ENCODE measurements at regions of chr19 and their contacts with region 1.

Region 1: DNA sequence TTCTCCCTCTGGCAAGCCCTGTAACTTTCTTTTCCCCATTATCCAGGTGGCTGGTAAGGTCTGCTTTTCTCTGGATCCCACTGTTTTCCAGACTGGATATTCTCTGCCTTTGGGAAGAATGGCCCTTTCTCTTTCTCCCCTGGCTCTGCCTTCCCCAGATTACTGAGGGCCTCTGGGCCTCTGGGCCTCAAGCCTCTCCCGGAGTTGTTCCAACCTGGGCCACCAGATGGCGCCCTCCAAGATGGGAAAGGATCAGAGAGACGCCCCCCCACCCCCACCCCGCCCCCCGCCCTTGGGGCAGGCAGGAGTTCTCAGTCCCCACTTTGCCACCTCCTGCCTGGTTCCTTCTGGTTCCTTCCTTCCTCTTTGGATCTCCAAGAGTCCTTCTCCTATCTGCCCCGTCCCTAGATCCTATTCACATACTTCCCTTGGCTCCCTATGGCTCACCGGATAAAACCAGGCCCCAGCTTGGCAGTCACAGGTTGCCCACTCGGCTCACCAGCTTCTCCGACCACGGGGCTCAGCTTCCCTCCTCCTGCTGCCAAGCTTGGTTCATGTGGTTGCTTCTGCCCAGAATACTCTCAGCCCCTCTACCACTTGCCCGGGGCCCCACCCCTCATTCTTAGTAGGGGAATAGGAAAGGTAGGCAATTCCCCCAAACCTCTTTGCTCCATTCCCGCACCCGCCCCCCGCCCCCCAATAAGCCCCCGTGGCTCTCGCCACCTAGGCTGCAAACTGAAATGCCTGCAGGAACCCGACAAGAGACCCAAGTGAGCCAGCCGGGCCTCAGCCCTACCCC is 13.1 kb downstream of the EPS8L1 start:
- DNase-seq: no peak
- H3K4me3 ChIP-seq: no peak overlapping the region
- CTCF ChIP-seq: peak; percentile 74

Region 2: GRCh38 chr19:54817670-54818536 is 270.8 kb before region 1 on chr19:
- CTCF ChIA-PET with region 1: no interaction called
- POLR2A ChIA-PET with region 1: no interaction called
- DNase-seq: no peak
- H3K4me3 ChIP-seq: no peak overlapping the region
- CTCF ChIP-seq: no peak

Region 3: GRCh38 chr19:55027472-55028337 is 61.0 kb before region 1 on chr19:
- CTCF ChIA-PET with region 1: no interaction called
- POLR2A ChIA-PET with region 1: no interaction called
- DNase-seq: no peak
- H3K4me3 ChIP-seq: no peak overlapping the region
- CTCF ChIP-seq: no peak

Region 4: DNA sequence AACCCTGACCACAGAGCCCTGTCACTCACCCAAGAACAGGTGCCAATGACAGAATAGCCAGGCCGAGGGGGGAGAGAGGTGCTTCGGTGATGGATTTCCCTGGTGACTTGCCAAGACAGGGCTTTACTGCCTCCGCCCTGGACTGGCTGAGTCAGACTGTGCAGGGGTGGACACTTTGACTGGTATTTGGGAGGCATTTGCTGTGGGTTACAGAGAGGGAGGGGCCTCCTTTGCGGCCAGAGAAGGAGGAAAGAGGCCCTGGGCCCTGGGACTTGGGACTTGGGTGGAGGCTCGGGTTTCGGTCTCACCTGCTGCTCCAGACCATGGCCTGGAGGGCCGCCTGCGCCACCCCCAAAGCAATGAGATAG is 17.6 kb before region 1 on chr19:
- CTCF ChIA-PET with region 1: interaction called, 20 read pairs
- POLR2A ChIA-PET with region 1: no interaction called
- DNase-seq: no peak
- H3K4me3 ChIP-seq: no peak overlapping the region
- CTCF ChIP-seq: no peak

Region 5: GRCh38 chr19:55099533-55100506 is 11.1 kb after region 1 on chr19:
- CTCF ChIA-PET with region 1: interaction called, 43 read pairs
- POLR2A ChIA-PET with region 1: no interaction called
- DNase-seq: no peak
- H3K4me3 ChIP-seq: no peak overlapping the region
- CTCF ChIP-seq: no peak

Region 6: DNA sequence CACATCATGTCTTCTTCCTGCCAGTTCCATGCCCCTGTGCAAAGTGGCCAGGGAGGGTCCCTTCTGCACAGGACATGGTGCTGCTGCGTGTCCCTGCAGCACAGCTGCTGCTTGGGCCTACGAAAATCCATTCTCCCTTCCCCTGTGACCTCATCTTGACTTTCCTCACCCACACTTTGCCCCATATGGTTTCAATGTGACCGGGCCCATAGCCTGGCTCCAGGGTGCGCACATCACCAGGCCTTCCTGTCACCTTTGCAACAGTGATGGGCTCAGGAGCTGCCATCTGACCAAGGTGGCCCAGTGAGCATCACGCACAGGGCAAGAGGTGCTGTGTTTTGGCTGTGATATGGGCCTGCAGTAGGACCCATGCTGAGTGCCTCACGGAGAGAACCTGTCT is 17.8 kb after region 1 on chr19:
- CTCF ChIA-PET with region 1: interaction called, 43 read pairs
- POLR2A ChIA-PET with region 1: no interaction called
- DNase-seq: no peak
- H3K4me3 ChIP-seq: no peak overlapping the region
- CTCF ChIP-seq: no peak

Region 7: DNA sequence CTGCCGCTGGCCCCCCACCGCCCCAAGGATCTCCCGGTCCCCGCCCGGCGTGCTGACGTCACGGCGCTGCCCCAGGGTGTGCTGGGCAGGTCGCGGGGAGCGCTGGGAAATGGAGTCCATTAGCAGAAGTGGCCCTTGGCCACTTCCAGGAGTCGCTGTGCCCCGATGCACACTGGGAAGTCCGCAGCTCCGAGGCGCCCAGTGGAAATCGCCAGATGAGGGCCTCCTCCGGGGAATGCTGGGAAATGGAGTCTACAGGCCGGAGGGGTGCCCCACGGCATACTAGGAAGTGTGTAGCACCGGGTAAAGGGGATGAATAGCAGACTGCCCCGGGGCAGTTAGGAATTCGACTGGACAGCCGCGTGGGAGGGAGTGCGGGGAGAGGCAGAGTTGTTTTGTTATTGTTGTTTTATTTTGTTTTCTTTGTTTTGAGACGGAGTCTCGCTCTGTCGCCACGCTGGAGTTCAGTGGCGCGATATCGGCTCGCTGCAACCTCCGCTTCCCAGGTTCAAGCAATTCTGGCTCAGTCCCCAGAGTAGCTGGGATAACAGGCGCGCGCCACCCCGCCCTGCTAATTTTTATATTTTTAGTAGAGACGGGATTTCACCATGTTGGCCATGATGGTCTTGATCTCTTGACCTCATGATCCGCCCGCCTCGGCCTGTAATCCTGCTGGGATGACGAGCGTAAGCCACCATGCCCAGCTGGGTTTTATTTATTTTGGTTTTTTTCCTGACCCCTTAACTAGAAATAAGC is 29.1 kb after region 1 on chr19 and contains the start of gene PPP1R12C:
- CTCF ChIA-PET with region 1: interaction called, 18 read pairs
- POLR2A ChIA-PET with region 1: no interaction called
- DNase-seq: peak; percentile 92
- H3K4me3 ChIP-seq: peak within 1 kb of the TSS; percentile 84
- CTCF ChIP-seq: no peak

Region 8: GRCh38 chr19:55178781-55179599 is 90.2 kb after region 1 on chr19:
- CTCF ChIA-PET with region 1: no interaction called
- POLR2A ChIA-PET with region 1: no interaction called
- DNase-seq: no peak
- H3K4me3 ChIP-seq: peak overlapping the region; percentile 56
- CTCF ChIP-seq: no peak